Endothelial cell of umbilical vein (primary cell): ENCODE measurements at regions of chr15 and their contacts with region 1.

Region 1: DNA sequence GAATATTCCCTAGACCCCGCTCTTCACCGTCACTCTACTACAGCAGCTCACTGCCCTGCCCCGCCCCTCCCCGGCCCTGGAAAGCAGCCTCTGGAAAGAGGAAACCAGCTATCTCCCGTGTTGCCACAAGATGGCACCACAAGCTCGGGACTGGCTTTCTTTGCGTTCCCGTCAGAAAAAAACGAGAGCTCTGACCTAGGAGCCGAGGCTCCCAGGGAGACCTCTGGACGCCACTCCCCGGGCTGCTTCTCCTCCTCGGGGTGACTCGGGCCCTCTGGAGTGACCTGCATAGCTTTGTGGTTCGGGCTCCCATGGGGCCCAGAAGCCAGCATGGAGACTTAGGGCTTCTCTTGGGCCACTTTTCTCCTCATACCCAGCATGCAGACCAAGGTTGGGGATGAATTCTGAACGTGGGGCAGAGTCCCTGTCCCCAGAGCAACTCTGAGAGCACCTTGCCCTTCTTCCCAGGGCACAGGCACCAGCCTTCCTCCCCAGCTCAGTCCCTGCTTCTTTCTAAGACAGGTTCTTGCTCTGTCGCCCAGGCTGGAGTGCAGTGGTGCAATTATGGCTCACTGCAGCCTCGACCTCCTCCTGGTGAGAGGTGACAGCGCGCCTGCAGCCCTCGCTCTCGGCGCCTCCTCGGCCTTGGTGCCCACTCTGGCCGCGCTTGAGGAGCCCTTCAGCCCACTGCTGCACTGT is 19.0 kb downstream of the STOML1 start:
- DNase-seq: peak; percentile 81
- H3K4me3 ChIP-seq: no peak overlapping the region
- H3K27ac ChIP-seq: no peak overlapping the region
- H3K4me1 ChIP-seq: peaks cover 15% of the 10 kb centered on the region
- H3K27me3 ChIP-seq: no peaks in the 10 kb centered on the region
- CTCF ChIP-seq: peak; percentile 86 to 89
- POLR2A ChIP-seq: no peak

Region 2: DNA sequence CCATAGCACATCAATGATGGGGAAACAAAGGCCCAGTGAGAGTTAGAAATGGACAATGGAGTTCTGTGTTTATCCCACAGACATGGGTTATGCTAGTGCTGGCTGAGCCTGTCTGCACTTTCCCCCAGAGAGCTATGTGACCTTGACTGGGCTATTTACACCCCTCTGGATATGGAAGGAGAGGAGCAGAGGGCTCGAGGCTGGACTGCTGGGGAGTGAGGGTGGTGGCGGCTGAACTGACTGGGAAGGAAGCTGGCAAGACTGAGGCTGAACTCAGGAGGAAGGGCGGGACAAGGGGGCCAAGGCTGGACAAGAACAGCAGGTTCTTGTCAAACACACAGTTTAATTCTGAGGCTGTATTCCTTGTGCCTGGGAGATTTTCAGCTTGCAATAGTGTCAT is 209.2 kb before region 1 on chr15:
- CTCF ChIA-PET with region 1: no interaction called
- POLR2A ChIA-PET with region 1: no interaction called
- dilution Hi-C with region 1: no loop called
- intact Hi-C with region 1: no loop called
- DNase-seq: no peak
- H3K4me3 ChIP-seq: no peak overlapping the region
- H3K27ac ChIP-seq: no peak overlapping the region
- H3K4me1 ChIP-seq: no peaks in the 10 kb centered on the region
- H3K27me3 ChIP-seq: peaks cover 14 to 18% of the 10 kb centered on the region in 2 experiments
- CTCF ChIP-seq: no peak
- POLR2A ChIP-seq: no peak

Region 3: DNA sequence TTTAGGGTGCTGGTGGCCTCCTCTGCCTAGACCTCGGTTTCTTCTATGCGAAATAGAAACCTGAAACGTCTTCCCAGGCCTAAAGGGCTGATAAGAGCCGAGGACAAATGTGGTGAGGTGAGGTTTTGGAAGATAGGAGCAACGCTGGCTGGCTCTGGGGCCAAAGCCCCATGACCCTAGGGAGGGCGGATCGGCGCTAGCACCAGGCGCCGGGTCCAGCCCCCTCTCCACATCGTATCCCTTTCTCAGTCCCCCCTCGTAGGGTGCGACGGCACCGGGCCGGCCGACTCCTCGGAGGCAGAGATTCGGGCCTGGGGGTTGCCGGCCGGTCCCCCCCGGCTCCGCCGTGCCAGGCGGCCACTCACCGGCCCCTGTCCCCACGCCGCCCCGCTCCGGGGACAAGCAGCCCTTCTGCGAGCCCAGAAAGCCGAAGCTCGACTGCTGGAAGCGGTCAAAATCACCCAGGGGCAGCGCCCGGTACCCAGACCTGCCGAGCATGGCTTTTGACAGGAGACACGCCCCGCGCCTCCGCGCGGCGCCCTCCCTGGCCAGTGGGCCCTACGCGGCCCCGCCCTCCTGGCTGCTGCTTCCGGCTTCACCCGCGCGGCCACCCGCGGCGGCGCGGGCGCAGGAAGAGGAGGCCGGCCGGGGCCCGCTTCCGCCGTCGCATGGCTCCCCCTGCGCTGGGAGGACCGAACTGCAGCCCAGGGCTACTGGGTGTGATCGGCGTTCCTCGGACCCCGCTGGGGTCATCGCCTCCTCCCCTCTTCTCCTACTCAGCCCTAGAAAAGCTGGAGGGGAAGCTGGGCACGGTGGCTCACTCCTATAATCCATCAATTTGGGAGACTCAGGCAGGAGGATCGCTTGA is 18.8 kb after region 1 on chr15 and contains the start of gene STOML1:
- CTCF ChIA-PET with region 1: interaction called, 45 read pairs
- POLR2A ChIA-PET with region 1: interaction called, 3 read pairs
- dilution Hi-C with region 1: no loop called
- intact Hi-C with region 1: no loop called
- DNase-seq: peak; percentile 90
- H3K4me3 ChIP-seq: peak within 1 kb of the TSS; percentile 51 to 67 (median 62)
- H3K27ac ChIP-seq: peak within 1 kb of the TSS; percentile 4
- H3K4me1 ChIP-seq: peaks cover 60% of the 10 kb centered on the region
- H3K27me3 ChIP-seq: no peaks in the 10 kb centered on the region
- CTCF ChIP-seq: peak; percentile 89 to 92
- POLR2A ChIP-seq: peak; percentile 67
- total RNA-seq, gene STOML1: 12.4 and 12.9 TPM in 2 replicates

Region 4: DNA sequence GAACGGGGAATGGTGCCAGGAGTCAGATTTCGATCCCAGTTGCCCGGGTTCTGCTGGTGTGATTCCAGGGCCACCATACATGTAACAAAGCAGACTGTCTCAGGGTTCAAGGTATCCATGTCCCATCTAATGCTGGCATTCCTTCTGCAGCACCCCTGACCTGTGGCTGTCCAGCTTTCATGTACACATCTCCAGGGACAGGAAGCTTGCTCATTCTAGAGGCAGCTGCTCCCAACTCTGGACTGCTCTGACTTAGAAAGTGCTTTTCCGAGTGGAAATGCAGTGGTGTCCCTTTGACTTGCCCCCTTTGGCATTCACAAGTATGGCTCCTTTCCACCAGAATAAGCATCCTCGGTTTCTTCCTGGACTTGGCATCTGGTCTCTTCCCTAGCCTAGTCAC is 52.3 kb after region 1 on chr15:
- CTCF ChIA-PET with region 1: interaction called, 40 read pairs
- POLR2A ChIA-PET with region 1: no interaction called
- dilution Hi-C with region 1: no loop called
- intact Hi-C with region 1: no loop called
- DNase-seq: peak; percentile 70
- H3K4me3 ChIP-seq: no peak overlapping the region
- H3K27ac ChIP-seq: peak overlapping the region; percentile 62
- H3K4me1 ChIP-seq: peaks cover 22% of the 10 kb centered on the region
- H3K27me3 ChIP-seq: no peaks in the 10 kb centered on the region
- CTCF ChIP-seq: no peak
- POLR2A ChIP-seq: no peak

Region 5: GRCh38 chr15:74053941-74054529 is 80.9 kb after region 1 on chr15:
- CTCF ChIA-PET with region 1: interaction called, 651 read pairs
- POLR2A ChIA-PET with region 1: no interaction called
- dilution Hi-C with region 1: no loop called
- intact Hi-C with region 1: no loop called
- DNase-seq: peak; percentile 41
- H3K4me3 ChIP-seq: no peak overlapping the region
- H3K27ac ChIP-seq: no peak overlapping the region
- H3K4me1 ChIP-seq: no peaks in the 10 kb centered on the region
- H3K27me3 ChIP-seq: peaks cover 3 to 12% of the 10 kb centered on the region in 2 experiments
- CTCF ChIP-seq: peak; percentile 19 to 77
- POLR2A ChIP-seq: no peak

Region 6: GRCh38 chr15:74134387-74135027 is 161.4 kb after region 1 on chr15:
- CTCF ChIA-PET with region 1: interaction called, 20 read pairs
- POLR2A ChIA-PET with region 1: no interaction called
- dilution Hi-C with region 1: no loop called
- intact Hi-C with region 1: loop called (anchors 5 kb)
- DNase-seq: peak; percentile 41
- H3K4me3 ChIP-seq: no peak overlapping the region
- H3K27ac ChIP-seq: no peak overlapping the region
- H3K4me1 ChIP-seq: peaks cover 12% of the 10 kb centered on the region
- H3K27me3 ChIP-seq: peaks cover 71 to 76% of the 10 kb centered on the region in 2 experiments
- CTCF ChIP-seq: peak; percentile 48 to 74
- POLR2A ChIP-seq: no peak

Region 7: DNA sequence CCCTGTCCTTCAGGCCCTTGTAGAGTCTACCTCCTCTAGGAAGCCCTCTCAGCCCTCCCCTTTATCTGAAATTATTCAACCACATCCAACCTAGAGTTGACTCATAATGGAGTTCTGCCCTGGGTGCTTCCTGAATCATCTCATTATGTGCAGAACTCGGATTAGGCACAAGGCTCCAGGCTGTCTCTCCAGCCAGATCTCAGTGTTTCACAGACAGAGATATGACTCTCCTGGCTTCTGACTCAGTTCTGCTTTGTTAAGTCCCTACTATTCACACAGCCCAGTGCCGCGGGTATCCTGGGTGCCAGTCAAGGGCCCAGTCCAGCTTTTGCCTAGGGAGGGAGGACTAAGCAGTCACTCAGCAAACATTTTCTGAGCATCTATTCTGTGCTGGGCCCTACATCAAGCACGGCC is 220.2 kb after region 1 on chr15:
- CTCF ChIA-PET with region 1: no interaction called
- POLR2A ChIA-PET with region 1: no interaction called
- dilution Hi-C with region 1: no loop called
- intact Hi-C with region 1: no loop called
- DNase-seq: no peak
- H3K4me3 ChIP-seq: no peak overlapping the region
- H3K27ac ChIP-seq: no peak overlapping the region
- H3K4me1 ChIP-seq: no peaks in the 10 kb centered on the region
- H3K27me3 ChIP-seq: no peaks in the 10 kb centered on the region
- CTCF ChIP-seq: no peak
- POLR2A ChIP-seq: no peak

Region 8: GRCh38 chr15:74307827-74308644 is 334.9 kb after region 1 on chr15:
- CTCF ChIA-PET with region 1: interaction called, 55 read pairs
- POLR2A ChIA-PET with region 1: no interaction called
- dilution Hi-C with region 1: no loop called
- intact Hi-C with region 1: loop called (anchors 5 kb)
- DNase-seq: peak; percentile 43
- H3K4me3 ChIP-seq: no peak overlapping the region
- H3K27ac ChIP-seq: no peak overlapping the region
- H3K4me1 ChIP-seq: no peaks in the 10 kb centered on the region
- H3K27me3 ChIP-seq: peaks cover 18 to 31% of the 10 kb centered on the region in 2 experiments
- CTCF ChIP-seq: peak; percentile 55 to 74
- POLR2A ChIP-seq: no peak